ENCODE measurements at regions of chr22 and their contacts with region 1.

Region 1: GRCh38 chr22:23750714-23751440 is at the start of gene ZNF70:
- DNase-seq: peak; percentile 36 to 92
- H3K4me3 ChIP-seq: peak within 1 kb of the TSS; percentile 75 to 88
- H3K27ac ChIP-seq: peak within 1 kb of the TSS; percentile 81 to 92
- H3K4me1 ChIP-seq: peaks cover 0 to 3% of the 10 kb centered on the region in 2 donors
- H3K27me3 ChIP-seq: no peaks in the 10 kb centered on the region
- CTCF ChIP-seq: peak in 2 of 3 experiments; percentile 13 to 21
- total RNA-seq, gene ZNF70: 5.2 TPM

Region 2: DNA sequence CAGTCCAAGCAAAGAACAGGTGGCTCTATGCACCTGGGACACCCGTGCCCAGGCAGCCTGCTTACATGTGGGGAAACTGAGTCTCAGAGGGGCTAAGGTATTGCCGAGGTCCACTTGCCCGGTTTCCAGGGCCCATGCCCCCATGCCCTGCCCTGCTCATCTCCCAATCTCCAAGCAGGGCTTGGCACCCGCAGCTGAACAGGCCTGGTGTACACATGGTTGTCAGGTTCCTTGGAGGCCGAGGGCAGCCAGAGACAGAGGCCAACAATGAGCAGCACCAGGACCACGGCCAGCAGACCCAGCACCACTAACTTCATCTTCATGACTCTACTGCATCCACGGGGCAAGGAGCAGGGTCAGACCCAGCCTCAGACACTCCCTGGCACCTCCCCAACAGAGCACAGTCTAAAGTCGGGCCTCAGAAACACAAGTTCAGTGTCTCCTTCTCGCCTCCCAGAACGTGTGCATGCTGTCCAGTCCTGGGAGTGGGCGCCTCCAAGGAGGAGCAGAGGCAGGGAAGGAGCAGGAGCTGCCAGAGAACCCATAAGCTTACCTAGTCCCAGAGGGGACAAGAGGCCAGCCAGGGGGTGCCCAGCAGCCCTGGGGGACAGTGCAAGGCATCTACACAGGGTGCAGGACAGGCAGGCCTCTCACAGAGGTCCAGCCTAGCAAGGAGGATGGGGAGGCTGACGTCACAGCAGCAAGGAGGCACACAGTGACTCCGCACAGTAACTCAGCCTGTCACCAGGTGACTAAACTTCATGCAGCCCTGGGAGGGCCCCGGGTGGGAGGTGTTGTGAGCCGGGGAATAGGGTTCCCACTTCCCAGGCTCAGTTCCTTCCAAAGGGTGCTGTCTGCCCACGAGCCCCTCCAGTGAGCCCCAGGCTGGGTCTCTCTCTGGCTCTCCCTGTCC is 80.2 kb before region 1 on chr22:
- intact Hi-C with region 1: no loop called
- DNase-seq: no peak
- H3K4me3 ChIP-seq: no peak overlapping the region
- H3K27ac ChIP-seq: no peak overlapping the region
- H3K4me1 ChIP-seq: no peaks in the 10 kb centered on the region
- H3K27me3 ChIP-seq: no peaks in the 10 kb centered on the region
- CTCF ChIP-seq: no peak

Region 3: DNA sequence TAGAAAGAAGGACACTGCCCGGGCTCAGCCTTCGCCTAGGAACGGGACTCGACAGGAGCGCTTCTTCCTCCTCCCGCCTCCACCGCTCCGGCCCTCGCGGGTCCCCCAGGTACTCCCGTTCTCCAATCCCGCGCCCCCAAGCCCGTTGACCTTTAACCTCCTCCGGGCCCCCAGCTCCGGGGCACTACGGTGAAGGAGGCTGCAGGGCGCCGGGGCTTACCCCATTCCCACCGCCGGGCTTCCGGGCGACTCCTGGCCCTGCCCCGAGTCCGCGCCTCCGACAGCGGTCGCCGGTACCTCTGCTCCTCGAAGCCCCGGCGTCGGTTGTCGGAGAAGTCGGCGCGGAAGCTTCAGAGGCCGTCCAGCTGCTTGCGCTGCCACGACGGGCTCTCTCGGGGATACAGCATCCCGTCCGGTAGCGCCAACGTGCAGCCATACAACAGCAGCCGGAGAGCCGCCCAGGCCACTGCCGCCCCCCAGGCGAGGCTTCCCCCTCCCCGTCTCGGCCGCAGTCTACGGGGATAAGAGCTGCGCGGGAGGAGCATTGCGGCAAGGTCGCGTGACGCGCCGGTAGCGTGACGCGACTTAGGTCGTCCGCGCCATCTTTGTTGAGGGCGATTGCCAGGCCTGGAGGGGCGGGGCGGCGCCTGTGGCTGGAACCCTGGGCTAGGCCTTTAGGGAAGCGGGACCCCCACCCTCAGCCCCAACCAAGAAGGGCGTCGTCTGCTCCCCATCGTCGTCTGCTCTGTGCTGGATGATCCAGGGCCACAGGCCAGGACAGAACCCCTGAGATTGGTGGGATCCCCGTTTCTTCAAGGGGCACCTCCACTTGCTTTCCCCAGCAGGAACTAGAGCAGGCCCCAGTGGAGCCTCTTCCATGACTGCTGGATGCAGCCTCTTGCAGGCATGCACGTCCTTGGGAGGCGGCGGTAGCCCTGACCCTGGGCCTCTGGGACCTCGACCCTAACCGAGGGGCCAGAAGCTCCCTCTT is 33.8 kb before region 1 on chr22:
- intact Hi-C with region 1: loop called (anchors 2 kb)
- DNase-seq: peak; percentile 38 to 89
- H3K4me3 ChIP-seq: peak overlapping the region; percentile 62 to 83
- H3K27ac ChIP-seq: peak overlapping the region; percentile 42 to 63
- H3K4me1 ChIP-seq: peaks cover 0 to 16% of the 10 kb centered on the region in 2 donors
- H3K27me3 ChIP-seq: no peaks in the 10 kb centered on the region
- CTCF ChIP-seq: no peak

Region 4: GRCh38 chr22:23767673-23768548 is 17.0 kb after region 1 on chr22 and contains the start of gene CHCHD10:
- intact Hi-C with region 1: loop called (anchors 1 kb)
- DNase-seq: peak; percentile 35 to 89
- H3K4me3 ChIP-seq: peak within 1 kb of the TSS; percentile 70 to 75
- H3K27ac ChIP-seq: peak within 1 kb of the TSS; percentile 71 to 74
- H3K4me1 ChIP-seq: peaks cover 7 to 26% of the 10 kb centered on the region in 2 donors
- H3K27me3 ChIP-seq: no peaks in the 10 kb centered on the region
- CTCF ChIP-seq: peak; percentile 77 to 84 (median 82)
- total RNA-seq, gene CHCHD10: 2.0 TPM

Measured in ascending aorta (tissue), 2 donors.